Uterus (tissue), 4 donors: ENCODE measurements at regions of chr14 and their contacts with region 1.

Region 1: GRCh38 chr14:22556990-22557623 is 31.9 kb downstream of the DAD1 start:
- DNase-seq: peak; percentile 82 to 85
- H3K4me3 ChIP-seq: peak overlapping the region; percentile 22 to 27
- H3K27ac ChIP-seq: peak overlapping the region; percentile 77 to 79
- H3K4me1 ChIP-seq: peaks cover 0 to 3% of the 10 kb centered on the region in 2 donors
- H3K27me3 ChIP-seq: no peaks in the 10 kb centered on the region
- CTCF ChIP-seq: peak; percentile 93 to 99 (median 98)
- POLR2A ChIP-seq: peak in 1 of 2 donors; percentile 19

Region 2: DNA sequence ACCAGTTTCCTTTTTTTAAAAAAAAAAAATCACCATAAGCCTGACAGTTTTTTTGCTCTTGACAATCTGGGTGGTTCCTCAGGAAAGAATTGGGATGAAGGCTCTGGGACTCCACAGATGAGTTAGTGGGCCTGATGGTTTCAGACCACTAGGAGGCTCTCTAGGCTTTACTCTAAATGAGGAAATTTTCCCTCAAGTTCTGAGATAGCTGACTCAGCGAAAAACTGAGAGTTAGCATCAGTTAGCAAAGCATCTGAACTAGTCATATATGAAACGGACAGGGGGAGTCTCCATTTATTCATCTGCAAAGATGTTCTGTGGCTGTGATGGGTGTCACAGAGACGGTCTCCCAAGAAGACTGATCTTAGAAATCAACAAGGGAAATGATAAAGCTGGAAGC is 569.2 kb before region 1 on chr14:
- intact Hi-C with region 1: no loop called
- DNase-seq: no peak
- H3K4me3 ChIP-seq: no peak overlapping the region
- H3K27ac ChIP-seq: no peak overlapping the region
- H3K4me1 ChIP-seq: no peaks in the 10 kb centered on the region
- H3K27me3 ChIP-seq: no peaks in the 10 kb centered on the region
- CTCF ChIP-seq: no peak
- POLR2A ChIP-seq: no peak

Region 3: DNA sequence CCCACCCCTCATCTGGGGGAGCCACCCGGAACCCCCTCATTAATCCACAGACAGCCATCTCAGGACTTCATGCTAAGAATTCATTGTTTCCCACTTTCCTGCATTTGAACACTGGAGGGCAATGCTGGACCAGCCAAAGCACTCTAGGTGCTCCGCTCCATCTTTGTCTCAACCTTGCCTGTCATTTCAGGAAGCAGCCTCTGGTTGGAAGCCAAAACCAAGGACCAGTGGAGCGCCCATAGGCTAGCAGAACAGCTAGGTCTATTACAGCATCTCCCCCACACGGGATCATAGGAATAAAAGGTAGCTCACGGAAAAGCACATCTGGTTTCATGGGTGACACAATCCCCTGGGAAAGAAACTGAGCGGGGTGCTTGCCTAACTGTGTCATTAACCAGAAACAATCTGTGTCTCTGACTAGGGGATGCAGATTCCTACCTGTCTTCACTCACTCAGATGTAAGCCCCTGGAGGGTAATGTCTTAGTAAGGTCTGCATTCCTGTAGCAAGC is 165.1 kb before region 1 on chr14:
- intact Hi-C with region 1: loop called (anchors 5 kb)
- DNase-seq: peak; percentile 49 to 72
- H3K4me3 ChIP-seq: no peak overlapping the region
- H3K27ac ChIP-seq: no peak overlapping the region
- H3K4me1 ChIP-seq: no peaks in the 10 kb centered on the region
- H3K27me3 ChIP-seq: no peaks in the 10 kb centered on the region
- CTCF ChIP-seq: peak; percentile 69 to 87 (median 80)
- POLR2A ChIP-seq: no peak

Region 4: DNA sequence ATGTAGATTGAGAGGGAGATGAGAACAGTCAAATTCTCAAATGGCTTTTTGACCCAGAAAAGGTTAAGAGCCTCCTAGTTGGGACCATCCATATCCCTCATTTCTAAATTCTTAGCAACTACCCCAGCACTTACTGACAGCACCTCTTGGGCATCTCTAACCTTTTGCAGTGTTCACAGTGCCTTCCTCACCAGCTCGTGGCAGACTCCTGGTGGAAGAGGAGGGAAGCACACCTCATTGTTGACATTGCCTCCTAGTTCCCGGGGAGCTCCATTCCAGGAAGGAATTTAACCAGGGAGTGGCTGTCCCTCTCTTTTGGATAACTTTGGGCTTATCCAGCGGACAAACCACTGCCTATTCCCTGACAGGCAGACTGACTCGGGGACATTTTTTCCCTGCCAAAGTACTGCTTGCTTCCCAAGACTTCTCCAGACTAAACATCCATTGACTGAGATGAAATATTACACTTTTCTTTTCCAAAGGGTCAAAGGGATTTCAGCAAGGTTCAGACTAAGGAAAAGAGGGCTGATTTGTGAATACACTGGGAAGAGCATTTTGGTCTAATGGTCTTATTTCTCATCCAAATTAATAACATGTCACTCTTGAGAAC is 96.0 kb after region 1 on chr14:
- intact Hi-C with region 1: loop called (anchors 10 kb)
- DNase-seq: peak; percentile 52 to 60
- H3K4me3 ChIP-seq: no peak overlapping the region
- H3K27ac ChIP-seq: no peak overlapping the region
- H3K4me1 ChIP-seq: no peaks in the 10 kb centered on the region
- H3K27me3 ChIP-seq: no peaks in the 10 kb centered on the region
- CTCF ChIP-seq: peak; percentile 64 to 76 (median 74)
- POLR2A ChIP-seq: no peak

Region 5: DNA sequence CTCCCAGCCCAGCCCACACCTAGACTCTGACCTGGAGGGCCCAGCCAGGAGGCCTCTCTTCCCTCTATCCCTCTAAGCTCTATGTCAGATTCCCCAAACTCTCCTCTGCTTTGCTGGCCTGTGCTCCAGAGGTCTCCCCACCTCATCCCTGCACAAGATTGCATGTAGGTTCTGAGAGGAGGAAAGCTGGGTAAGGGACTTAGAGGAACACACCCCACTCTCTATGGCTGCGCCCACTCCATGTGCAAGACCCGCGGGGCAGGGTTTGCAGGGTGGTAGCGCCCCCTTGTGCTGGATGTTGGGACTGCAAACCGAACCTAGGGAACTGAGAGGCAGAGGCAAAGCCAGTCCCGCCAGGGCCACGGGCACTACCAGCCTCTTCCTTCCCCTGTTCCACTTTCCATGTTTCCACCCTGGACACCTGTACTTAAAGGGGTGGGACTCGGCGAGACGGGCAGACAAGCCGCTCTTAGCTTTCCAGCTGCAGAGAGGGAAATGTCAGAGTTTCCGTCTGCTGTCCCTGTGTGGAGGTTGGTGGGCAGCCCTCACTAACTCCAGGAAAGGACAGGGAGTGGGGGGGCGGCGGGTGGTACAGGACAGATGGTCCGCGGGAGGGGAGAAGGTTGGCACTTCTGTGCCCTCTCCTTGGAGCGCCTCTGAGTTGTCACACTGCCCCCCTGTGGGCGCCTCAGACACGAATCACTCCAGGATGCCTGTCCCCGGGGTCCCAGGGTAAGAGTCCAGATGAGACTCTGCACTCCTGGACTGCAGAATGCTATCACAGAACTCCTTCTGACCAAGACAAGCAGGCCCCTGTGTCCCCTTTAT is 296.0 kb after region 1 on chr14:
- intact Hi-C with region 1: loop called (anchors 10 kb)
- DNase-seq: peak; percentile 93 to 94
- H3K4me3 ChIP-seq: peak overlapping the region; percentile 25 to 26
- H3K27ac ChIP-seq: peak overlapping the region; percentile 96 to 100
- H3K4me1 ChIP-seq: peaks cover 17 to 34% of the 10 kb centered on the region in 2 donors
- H3K27me3 ChIP-seq: no peaks in the 10 kb centered on the region
- CTCF ChIP-seq: peak; percentile 68 to 99 (median 97)
- POLR2A ChIP-seq: peak in 1 of 2 donors; percentile 39